Activated naive CD8-positive, alpha-beta T cell treated with anti-CD3 and anti-CD28 coated beads, Interleukin-2, amount 10 ng/mL, durations not matched to agents 7 days and 5 days (primary cell): ENCODE measurements at regions of chr22 and their contacts with region 1.

Region 1: GRCh38 chr22:41697126-41697775 is 2.1 kb upstream of the MEI1 start:
- DNase-seq: peak; percentile 96
- ATAC-seq: peak; percentile 65
- H3K4me3 Mint-ChIP-seq: peak overlapping the region; percentile 24
- H3K27ac Mint-ChIP-seq: peak overlapping the region; percentile 77
- H3K4me1 Mint-ChIP-seq: peaks cover 12% of the 10 kb centered on the region
- H3K27me3 Mint-ChIP-seq: peaks cover 3% of the 10 kb centered on the region

Region 2: GRCh38 chr22:41940832-41941765 is 243.8 kb after region 1 on chr22:
- POLR2A ChIA-PET with region 1: interaction called, 20 read pairs
- DNase-seq: peak; percentile 88
- ATAC-seq: peak; percentile 75
- H3K4me3 Mint-ChIP-seq: peak overlapping the region; percentile 18
- H3K27ac Mint-ChIP-seq: peak overlapping the region; percentile 91
- H3K4me1 Mint-ChIP-seq: peaks cover 44% of the 10 kb centered on the region
- H3K27me3 Mint-ChIP-seq: no peaks in the 10 kb centered on the region